Activated CD8-positive, alpha-beta T cell treated with anti-CD3 and anti-CD28 coated beads for 36 hours (primary cell): ENCODE measurements at regions of chr1 and their contacts with region 1.

Region 1: GRCh38 chr1:209692745-209693504 is 11.7 kb upstream of the HSD11B1 start:
- DNase-seq: peak; percentile 80
- ATAC-seq: peak; percentile 78
- H3K4me3 Mint-ChIP-seq: no peak overlapping the region
- H3K27ac Mint-ChIP-seq: no peak overlapping the region
- H3K4me1 Mint-ChIP-seq: peaks cover 18% of the 10 kb centered on the region
- H3K27me3 Mint-ChIP-seq: peaks cover 1% of the 10 kb centered on the region
- CTCF ChIP-seq: peak; percentile 97

Region 2: GRCh38 chr1:209565759-209566678 is 126.9 kb before region 1 on chr1:
- CTCF ChIA-PET with region 1: interaction called, 14 read pairs
- POLR2A ChIA-PET with region 1: no interaction called
- intact Hi-C with region 1: loop called (anchors 2 kb)
- DNase-seq: peak; percentile 89
- ATAC-seq: peak; percentile 91
- H3K4me3 Mint-ChIP-seq: no peak overlapping the region
- H3K27ac Mint-ChIP-seq: no peak overlapping the region
- H3K4me1 Mint-ChIP-seq: peaks cover 6% of the 10 kb centered on the region
- H3K27me3 Mint-ChIP-seq: peaks cover 36% of the 10 kb centered on the region
- CTCF ChIP-seq: peak; percentile 82

Region 3: GRCh38 chr1:209601809-209602657 is 90.9 kb before region 1 on chr1:
- CTCF ChIA-PET with region 1: interaction called, 10 read pairs
- POLR2A ChIA-PET with region 1: interaction called, 3 read pairs
- intact Hi-C with region 1: loop called (anchors 1 kb)
- DNase-seq: peak; percentile 63
- ATAC-seq: peak; percentile 97
- H3K4me3 Mint-ChIP-seq: no peak overlapping the region
- H3K27ac Mint-ChIP-seq: no peak overlapping the region
- H3K4me1 Mint-ChIP-seq: no peaks in the 10 kb centered on the region
- H3K27me3 Mint-ChIP-seq: peaks cover 13% of the 10 kb centered on the region
- CTCF ChIP-seq: peak; percentile 62

Region 4: DNA sequence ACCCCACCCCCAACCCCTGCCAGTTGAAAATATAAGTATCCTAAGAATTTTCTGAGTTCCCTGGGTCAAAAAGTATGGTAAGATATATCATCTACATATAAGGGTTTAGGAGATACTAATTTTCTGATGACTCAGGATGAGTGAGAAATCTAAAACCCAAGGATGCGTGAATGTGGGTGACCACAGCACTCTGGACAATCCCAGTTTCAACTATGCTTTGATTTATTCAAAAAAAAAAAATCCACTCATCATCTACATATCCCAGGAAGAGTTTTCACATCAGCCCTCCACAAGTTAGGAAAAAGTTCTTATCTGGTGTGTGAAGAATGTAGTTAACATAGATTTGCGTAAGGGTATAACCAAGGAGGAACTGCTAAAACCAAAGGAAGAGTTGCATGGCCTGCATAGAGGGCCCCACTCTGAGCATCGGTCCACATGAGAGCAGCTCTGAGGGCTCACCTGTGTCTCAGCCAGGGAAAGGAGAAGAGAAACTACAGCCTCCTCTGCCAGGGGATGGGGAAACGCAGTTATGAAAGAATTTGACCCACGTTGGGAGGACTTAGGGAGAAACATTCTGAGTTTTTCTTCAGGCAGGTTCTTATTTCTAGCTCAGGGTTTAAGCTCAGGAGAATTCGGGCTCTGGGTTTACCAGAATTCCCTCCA is 59.5 kb before region 1 on chr1:
- CTCF ChIA-PET with region 1: interaction called, 6 read pairs
- POLR2A ChIA-PET with region 1: no interaction called
- intact Hi-C with region 1: loop called (anchors 5 kb)
- DNase-seq: no peak
- ATAC-seq: no peak
- H3K4me3 Mint-ChIP-seq: no peak overlapping the region
- H3K27ac Mint-ChIP-seq: no peak overlapping the region
- H3K4me1 Mint-ChIP-seq: no peaks in the 10 kb centered on the region
- H3K27me3 Mint-ChIP-seq: no peaks in the 10 kb centered on the region
- CTCF ChIP-seq: no peak

Region 5: DNA sequence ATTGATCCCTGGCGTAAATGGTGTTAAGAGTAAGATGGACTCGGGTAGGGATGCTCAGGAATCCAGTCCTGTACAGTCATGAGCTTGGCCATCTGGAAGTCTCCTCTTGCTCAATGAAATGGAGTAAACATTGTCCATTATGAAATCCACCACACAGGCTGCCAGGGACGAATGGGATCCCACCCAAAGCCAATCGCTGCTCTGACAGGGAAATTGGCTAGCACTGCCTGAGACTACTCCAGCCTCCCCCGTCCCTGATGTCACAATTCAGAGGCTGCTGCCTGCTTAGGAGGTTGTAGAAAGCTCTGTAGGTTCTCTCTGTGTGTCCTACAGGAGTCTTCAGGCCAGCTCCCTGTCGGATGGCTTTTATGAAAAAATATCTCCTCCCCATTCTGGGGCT is 11.7 kb after region 1 on chr1 and contains the start of gene HSD11B1:
- CTCF ChIA-PET with region 1: interaction called, 29 read pairs
- POLR2A ChIA-PET with region 1: no interaction called
- intact Hi-C with region 1: no loop called
- DNase-seq: no peak
- ATAC-seq: no peak
- H3K4me3 Mint-ChIP-seq: no peak within 1 kb of the TSS
- H3K27ac Mint-ChIP-seq: peak within 1 kb of the TSS; percentile 76
- H3K4me1 Mint-ChIP-seq: peaks cover 33% of the 10 kb centered on the region
- H3K27me3 Mint-ChIP-seq: no peaks in the 10 kb centered on the region
- CTCF ChIP-seq: no peak
- total RNA-seq, gene HSD11B1: 0.47 to 0.59 TPM

Region 6: GRCh38 chr1:209717818-209718217 is 24.9 kb after region 1 on chr1:
- CTCF ChIA-PET with region 1: no interaction called
- POLR2A ChIA-PET with region 1: no interaction called
- intact Hi-C with region 1: no loop called
- DNase-seq: no peak
- ATAC-seq: no peak
- H3K4me3 Mint-ChIP-seq: no peak overlapping the region
- H3K27ac Mint-ChIP-seq: peak overlapping the region; percentile 30
- H3K4me1 Mint-ChIP-seq: peaks cover 36% of the 10 kb centered on the region
- H3K27me3 Mint-ChIP-seq: no peaks in the 10 kb centered on the region
- CTCF ChIP-seq: no peak

Region 7: DNA sequence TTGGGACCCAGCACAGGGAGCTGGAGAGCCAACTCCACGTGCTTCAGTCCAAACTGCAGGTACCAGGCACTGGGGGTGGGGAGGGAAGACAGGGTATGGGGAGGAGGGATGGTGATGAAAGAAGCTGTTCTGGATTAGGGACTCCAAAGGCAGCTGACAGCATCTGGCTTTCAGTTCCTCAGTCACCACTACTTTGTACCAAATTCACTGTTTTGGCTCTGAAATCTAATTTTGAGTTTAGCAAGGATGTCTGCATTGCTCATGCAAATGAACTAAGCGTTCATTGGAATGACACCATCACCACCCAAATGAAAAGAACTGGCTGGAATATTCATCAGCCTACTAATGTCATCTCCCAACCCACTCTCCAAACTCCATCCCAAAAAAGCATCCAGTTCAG is 82.8 kb after region 1 on chr1:
- CTCF ChIA-PET with region 1: no interaction called
- POLR2A ChIA-PET with region 1: no interaction called
- intact Hi-C with region 1: no loop called
- DNase-seq: no peak
- ATAC-seq: no peak
- H3K4me3 Mint-ChIP-seq: no peak overlapping the region
- H3K27ac Mint-ChIP-seq: peak overlapping the region; percentile 80
- H3K4me1 Mint-ChIP-seq: peaks cover 51% of the 10 kb centered on the region
- H3K27me3 Mint-ChIP-seq: no peaks in the 10 kb centered on the region
- CTCF ChIP-seq: no peak

Region 8: GRCh38 chr1:209839875-209840491 is 147.1 kb after region 1 on chr1:
- CTCF ChIA-PET with region 1: no interaction called
- POLR2A ChIA-PET with region 1: no interaction called
- intact Hi-C with region 1: no loop called
- DNase-seq: peak; percentile 17
- ATAC-seq: peak; percentile 72
- H3K4me3 Mint-ChIP-seq: no peak overlapping the region
- H3K27ac Mint-ChIP-seq: peak overlapping the region; percentile 73
- H3K4me1 Mint-ChIP-seq: peaks cover 36% of the 10 kb centered on the region
- H3K27me3 Mint-ChIP-seq: no peaks in the 10 kb centered on the region
- CTCF ChIP-seq: no peak